ENCODE measurements at regions of chr5 and their contacts with region 1.

Region 1: DNA sequence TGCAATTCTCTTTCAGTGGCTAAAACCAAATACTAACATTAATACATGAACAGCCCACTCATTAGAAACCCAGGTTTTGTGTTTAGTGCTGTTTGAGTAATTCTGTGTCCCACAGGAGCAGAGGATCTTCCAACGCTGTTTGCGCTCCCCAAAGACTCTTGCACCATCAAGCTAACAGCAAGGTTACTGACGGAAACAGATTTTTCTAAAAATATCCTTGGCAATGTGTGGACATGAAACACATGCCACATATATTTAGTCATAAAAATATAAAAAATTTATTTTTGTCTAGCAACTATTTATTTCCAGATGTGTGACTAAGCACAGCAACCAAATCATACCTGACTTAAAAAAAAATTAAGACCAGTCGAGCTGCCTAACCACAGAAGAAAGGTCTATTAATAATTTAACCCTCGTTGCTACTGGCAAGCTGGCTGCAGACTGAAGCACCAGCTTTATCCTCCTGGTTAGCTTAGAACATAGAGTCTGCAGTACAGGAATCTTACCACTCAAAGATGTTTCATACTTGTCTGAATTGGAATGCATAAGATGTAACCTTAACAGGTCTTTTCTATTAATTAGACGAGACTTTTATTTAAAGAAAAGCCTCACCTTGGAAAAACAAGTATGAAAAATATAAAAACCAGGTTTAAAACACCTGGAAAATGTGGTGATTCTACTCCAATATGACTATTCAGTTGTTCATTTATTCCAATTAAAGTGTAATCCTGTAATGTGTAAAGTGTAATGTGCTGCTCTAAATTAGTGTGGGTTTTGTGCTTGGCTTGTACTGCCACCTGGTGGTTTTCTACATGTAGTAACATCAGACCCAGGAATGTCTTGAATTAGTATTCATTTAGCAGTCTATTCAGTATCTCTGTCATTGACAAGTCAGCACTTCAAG is 272.5 kb downstream of the EPB41L4A start:
- DNase-seq: peak; percentile 54 to 65
- H3K4me3 ChIP-seq: no peak overlapping the region
- H3K27ac ChIP-seq: no peak overlapping the region
- H3K4me1 ChIP-seq: peaks cover 8 to 17% of the 10 kb centered on the region in 2 donors
- H3K27me3 ChIP-seq: no peaks in the 10 kb centered on the region
- CTCF ChIP-seq: peak; percentile 49 to 94 (median 85)
- POLR2A ChIP-seq: no peak

Region 2: DNA sequence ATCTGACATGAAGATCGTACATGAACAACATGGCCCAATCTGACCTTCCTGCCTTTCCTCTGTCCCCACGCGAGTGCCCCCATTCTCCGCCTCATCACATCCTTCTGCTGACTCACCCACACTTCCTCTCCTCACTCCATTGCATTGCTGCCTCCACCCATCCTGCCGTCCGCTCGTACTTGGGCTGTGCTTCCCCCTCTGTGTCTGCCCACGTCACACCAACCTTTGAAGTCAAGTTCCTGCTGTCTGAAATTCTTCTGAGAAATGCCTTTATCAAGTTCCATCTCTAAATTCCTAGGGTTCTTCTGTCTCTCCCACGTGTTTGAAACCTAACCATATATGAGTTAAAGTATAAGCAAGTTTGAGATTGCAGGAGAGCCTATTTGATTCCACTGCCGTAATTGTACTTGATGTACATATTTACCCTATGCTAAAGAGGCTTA is 616.3 kb before region 1 on chr5:
- intact Hi-C with region 1: loop called (anchors 5 kb)
- DNase-seq: peak; percentile 18 to 33
- H3K4me3 ChIP-seq: no peak overlapping the region
- H3K27ac ChIP-seq: peak overlapping the region in 1 of 3 donors; percentile 10
- H3K4me1 ChIP-seq: no peaks in the 10 kb centered on the region
- H3K27me3 ChIP-seq: no peaks in the 10 kb centered on the region
- CTCF ChIP-seq: no peak
- POLR2A ChIP-seq: no peak

Region 3: GRCh38 chr5:111550279-111551020 is 596.1 kb before region 1 on chr5:
- intact Hi-C with region 1: loop called (anchors 5 kb)
- DNase-seq: peak; percentile 60 to 72
- H3K4me3 ChIP-seq: no peak overlapping the region
- H3K27ac ChIP-seq: no peak overlapping the region
- H3K4me1 ChIP-seq: peaks cover 0 to 3% of the 10 kb centered on the region in 2 donors
- H3K27me3 ChIP-seq: no peaks in the 10 kb centered on the region
- CTCF ChIP-seq: peak; percentile 36 to 72 (median 54)
- POLR2A ChIP-seq: no peak

Region 4: GRCh38 chr5:112253478-112254250 is 107.1 kb after region 1 on chr5:
- intact Hi-C with region 1: no loop called
- DNase-seq: no peak
- H3K4me3 ChIP-seq: no peak overlapping the region
- H3K27ac ChIP-seq: peak overlapping the region in 1 of 3 donors; percentile 34
- H3K4me1 ChIP-seq: peaks cover 27 to 33% of the 10 kb centered on the region in 2 donors
- H3K27me3 ChIP-seq: no peaks in the 10 kb centered on the region
- CTCF ChIP-seq: no peak
- POLR2A ChIP-seq: no peak

Region 5: GRCh38 chr5:112294126-112294525 is 147.6 kb after region 1 on chr5:
- intact Hi-C with region 1: no loop called
- DNase-seq: peak; percentile 16
- H3K4me3 ChIP-seq: no peak overlapping the region
- H3K27ac ChIP-seq: peak overlapping the region; percentile 73 to 88 (median 87)
- H3K4me1 ChIP-seq: peaks cover 12 to 43% of the 10 kb centered on the region in 2 donors
- H3K27me3 ChIP-seq: no peaks in the 10 kb centered on the region
- CTCF ChIP-seq: no peak
- POLR2A ChIP-seq: no peak

Measured in thyroid gland (tissue), 4 donors.